ENCODE measurements at regions of chr12 and their contacts with region 1.

Region 1: GRCh38 chr12:12724661-12725545 is 7.7 kb downstream of the CDKN1B start:
- DNase-seq: peak; percentile 81
- ATAC-seq: peak; percentile 69
- H3K4me3 Mint-ChIP-seq: peak overlapping the region; percentile 97
- H3K27ac Mint-ChIP-seq: peak overlapping the region; percentile 97
- H3K4me1 Mint-ChIP-seq: peaks cover 50% of the 10 kb centered on the region
- H3K27me3 Mint-ChIP-seq: no peaks in the 10 kb centered on the region
- CTCF ChIP-seq: no peak

Region 2: GRCh38 chr12:12527820-12528296 is 197.0 kb before region 1 on chr12:
- CTCF ChIA-PET with region 1: no interaction called
- POLR2A ChIA-PET with region 1: no interaction called
- intact Hi-C with region 1: no loop called
- DNase-seq: no peak
- ATAC-seq: no peak
- H3K4me3 Mint-ChIP-seq: no peak overlapping the region
- H3K27ac Mint-ChIP-seq: no peak overlapping the region
- H3K4me1 Mint-ChIP-seq: no peaks in the 10 kb centered on the region
- H3K27me3 Mint-ChIP-seq: no peaks in the 10 kb centered on the region
- CTCF ChIP-seq: no peak

Region 3: GRCh38 chr12:12704593-12705230 is 20.2 kb before region 1 on chr12:
- CTCF ChIA-PET with region 1: no interaction called
- POLR2A ChIA-PET with region 1: interaction called, 280 read pairs
- intact Hi-C with region 1: no loop called
- DNase-seq: no peak
- ATAC-seq: peak; percentile 87
- H3K4me3 Mint-ChIP-seq: no peak overlapping the region
- H3K27ac Mint-ChIP-seq: no peak overlapping the region
- H3K4me1 Mint-ChIP-seq: peaks cover 9% of the 10 kb centered on the region
- H3K27me3 Mint-ChIP-seq: no peaks in the 10 kb centered on the region
- CTCF ChIP-seq: no peak

Region 4: DNA sequence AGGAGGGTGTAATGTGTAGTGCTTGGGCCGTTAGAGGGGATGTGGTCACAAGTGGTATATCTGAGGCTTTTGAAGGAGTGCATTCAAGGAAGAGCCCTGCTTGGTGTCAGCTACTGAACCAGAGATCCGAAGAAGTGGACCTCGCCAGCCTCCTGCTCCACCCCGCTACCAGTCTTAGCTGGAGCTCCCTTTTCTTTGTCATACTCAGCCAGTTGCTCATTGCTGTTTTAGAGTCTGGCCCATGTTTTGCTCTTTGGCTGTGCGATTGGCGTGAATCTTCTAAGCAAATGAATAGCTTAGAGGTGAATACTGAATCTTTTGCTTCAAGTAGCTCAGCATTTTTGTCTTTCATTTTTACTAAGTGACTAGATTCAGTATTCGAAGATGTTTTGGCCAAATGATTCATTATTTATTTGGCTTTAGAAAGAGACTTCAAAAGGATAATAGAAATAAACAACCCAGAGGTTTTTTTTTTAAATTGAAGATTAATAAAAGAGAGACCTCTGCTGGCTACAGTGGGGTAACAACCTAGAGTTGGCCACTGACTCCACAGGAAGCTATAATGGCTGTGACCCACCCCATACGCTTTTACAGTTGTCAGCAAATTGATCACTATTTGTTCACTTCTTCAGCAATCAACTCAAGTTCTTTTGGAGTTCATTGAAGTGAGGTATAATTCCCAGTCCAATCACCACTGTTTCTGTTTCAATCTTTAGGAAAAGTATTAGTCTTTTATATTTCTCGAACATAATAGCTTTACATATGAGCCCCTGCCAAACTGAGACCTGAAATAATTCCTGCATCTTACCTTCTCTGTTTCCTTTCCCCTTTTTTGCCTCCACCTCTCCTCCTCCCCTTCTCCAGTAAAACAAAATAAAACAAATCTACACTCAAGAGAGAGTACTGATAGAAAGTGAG is 12.1 kb after region 1 on chr12:
- CTCF ChIA-PET with region 1: interaction called, 40 read pairs
- POLR2A ChIA-PET with region 1: interaction called, 70 read pairs
- intact Hi-C with region 1: loop called (anchors 1 kb)
- DNase-seq: peak; percentile 19
- ATAC-seq: peak; percentile 91
- H3K4me3 Mint-ChIP-seq: peak overlapping the region; percentile 30
- H3K27ac Mint-ChIP-seq: peak overlapping the region; percentile 72
- H3K4me1 Mint-ChIP-seq: peaks cover 13% of the 10 kb centered on the region
- H3K27me3 Mint-ChIP-seq: no peaks in the 10 kb centered on the region
- CTCF ChIP-seq: peak; percentile 19

Region 5: DNA sequence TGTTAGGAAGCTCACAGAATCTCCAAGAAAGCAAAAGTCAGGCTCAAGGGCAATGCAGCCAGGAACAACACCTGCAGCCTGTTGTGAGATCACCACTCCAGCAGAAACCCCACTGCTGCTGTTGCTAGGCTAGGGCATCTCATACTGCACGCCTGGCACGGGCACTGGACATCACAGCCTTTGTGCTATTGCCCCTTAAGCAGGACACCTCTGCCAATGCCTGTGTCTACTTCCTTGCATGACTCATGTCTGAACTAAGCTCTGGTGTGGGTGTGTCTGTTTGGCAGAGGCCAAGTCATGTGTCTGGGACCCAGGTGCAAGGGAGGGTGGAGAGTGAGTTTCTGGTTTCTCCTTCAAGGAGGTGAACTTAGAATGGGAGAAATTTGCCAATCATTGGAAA is 78.3 kb after region 1 on chr12:
- CTCF ChIA-PET with region 1: no interaction called
- POLR2A ChIA-PET with region 1: interaction called, 6 read pairs
- intact Hi-C with region 1: loop called (anchors 2 kb)
- DNase-seq: no peak
- ATAC-seq: peak; percentile 70
- H3K4me3 Mint-ChIP-seq: peak overlapping the region; percentile 12
- H3K27ac Mint-ChIP-seq: peak overlapping the region; percentile 6
- H3K4me1 Mint-ChIP-seq: peaks cover 65% of the 10 kb centered on the region
- H3K27me3 Mint-ChIP-seq: no peaks in the 10 kb centered on the region
- CTCF ChIP-seq: no peak

Measured in activated B cell treated with CpG ODN at 0.5 μM for 24 hours (primary cell).